GM13976 (cell line): ENCODE measurements at regions of chr14 and their contacts with region 1.

Region 1: GRCh38 chr14:89185919-89186855 is 230.8 kb downstream of the FOXN3 start:
- DNase-seq: no peak
- CTCF ChIP-seq: no peak

Region 2: DNA sequence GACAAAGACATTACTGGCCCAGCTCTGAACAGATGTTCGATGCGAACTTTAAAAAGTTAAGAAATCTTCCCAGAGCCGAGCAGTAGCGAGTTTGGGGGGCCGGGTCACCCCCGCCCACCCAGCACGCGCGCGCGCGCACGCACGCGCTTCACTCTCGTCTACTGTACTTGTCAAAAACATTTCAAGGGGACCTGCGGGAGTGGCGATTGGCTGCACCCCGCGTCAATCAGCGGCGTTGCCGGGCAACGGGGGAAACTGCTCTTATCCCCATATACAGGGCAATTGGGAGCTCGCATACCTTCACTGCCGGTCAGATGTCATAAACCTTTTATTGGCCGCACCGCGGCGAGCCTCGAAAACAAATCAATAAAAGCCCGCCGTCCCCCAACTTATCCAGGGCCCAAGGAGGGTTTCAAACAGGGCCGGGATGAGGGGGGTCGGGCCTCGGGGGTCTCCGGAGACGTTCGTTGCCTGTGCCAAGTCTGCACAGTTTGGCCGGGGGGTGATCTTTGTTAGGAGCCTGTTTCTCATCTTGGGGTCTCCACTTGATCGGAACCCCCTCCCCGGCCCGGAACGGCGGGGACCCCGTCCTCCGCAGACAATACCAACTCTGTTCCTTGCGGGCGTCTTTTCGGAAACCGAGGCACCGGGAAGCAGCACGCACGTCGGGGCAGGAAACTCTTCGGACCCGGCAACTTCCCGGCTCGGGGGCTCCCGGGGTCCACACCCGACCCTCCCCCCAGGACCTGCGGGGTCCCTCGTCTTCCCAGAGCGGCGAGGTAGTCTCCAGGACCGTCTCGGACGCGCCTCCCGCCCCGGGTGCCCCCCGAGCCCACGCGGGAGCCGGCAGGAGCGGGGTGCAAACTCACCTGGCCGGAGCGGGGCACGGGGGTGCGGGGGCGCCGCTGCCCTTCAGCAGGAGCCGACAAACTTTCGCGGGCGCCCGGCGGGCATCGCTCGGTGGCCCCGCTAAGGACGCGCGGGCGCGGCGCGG is 230.1 kb after region 1 on chr14:
- in situ Hi-C with region 1: loop called (anchors 10 kb)
- DNase-seq: peak; percentile 99
- CTCF ChIP-seq: no peak

Region 3: DNA sequence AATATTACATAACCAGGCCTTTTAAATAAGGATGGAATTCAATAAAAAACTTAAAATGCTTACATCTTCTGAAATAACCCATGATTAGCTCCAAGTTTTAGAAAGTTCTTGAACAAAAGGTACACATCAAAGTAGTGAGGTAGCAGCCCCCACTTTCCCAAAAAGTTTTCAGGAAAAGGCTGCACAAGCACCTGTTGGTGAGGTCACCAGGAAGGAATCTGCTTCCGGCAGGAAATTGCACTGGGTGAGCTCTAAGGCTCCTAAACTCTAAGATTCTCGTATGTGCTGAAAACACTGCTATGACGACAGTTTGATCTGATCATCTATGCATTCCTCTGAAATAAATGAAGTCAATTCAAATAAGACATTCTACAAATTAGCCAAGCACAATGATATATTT is 1664.3 kb after region 1 on chr14:
- in situ Hi-C with region 1: no loop called
- DNase-seq: no peak
- CTCF ChIP-seq: no peak